ENCODE measurements at regions of chr14 and their contacts with region 1.

Region 1: GRCh38 chr14:52695481-52696091 is at the start of gene ERO1A:
- DNase-seq: peak; percentile 81 to 83
- H3K4me3 ChIP-seq: peak within 1 kb of the TSS; percentile 50 to 64
- H3K27ac ChIP-seq: peak within 1 kb of the TSS; percentile 94 to 95
- H3K4me1 ChIP-seq: no peaks in the 10 kb centered on the region
- H3K27me3 ChIP-seq: no peaks in the 10 kb centered on the region
- CTCF ChIP-seq: no peak
- POLR2A ChIP-seq: peak; percentile 28 to 67
- total RNA-seq, gene ERO1A: 21.3 to 38.2 (median 30.4) TPM

Region 2: GRCh38 chr14:52080817-52081755 is 614.5 kb before region 1 on chr14:
- intact Hi-C with region 1: no loop called
- DNase-seq: peak in 1 of 2 donors; percentile 25
- H3K4me3 ChIP-seq: no peak overlapping the region
- H3K27ac ChIP-seq: peak overlapping the region in 1 of 2 donors; percentile 11
- H3K4me1 ChIP-seq: no peaks in the 10 kb centered on the region
- H3K27me3 ChIP-seq: no peaks in the 10 kb centered on the region
- CTCF ChIP-seq: no peak
- POLR2A ChIP-seq: no peak

Region 3: GRCh38 chr14:52950898-52951689 is 255.5 kb after region 1 on chr14 and contains the start of gene FERMT2:
- intact Hi-C with region 1: loop called (anchors 5 kb)
- DNase-seq: peak; percentile 92 to 93
- H3K4me3 ChIP-seq: peak within 1 kb of the TSS; percentile 86 to 96
- H3K27ac ChIP-seq: peak within 1 kb of the TSS; percentile 100
- H3K4me1 ChIP-seq: no peaks in the 10 kb centered on the region
- H3K27me3 ChIP-seq: no peaks in the 10 kb centered on the region
- CTCF ChIP-seq: peak in 2 of 4 experiments; percentile 19 to 28
- POLR2A ChIP-seq: peak; percentile 81 to 89
- total RNA-seq, gene FERMT2: 98.2 to 201 (median 180) TPM

Measured in uterus (tissue), 4 donors.